Heart left ventricle (tissue), 16 donors: ENCODE measurements at regions of chr2 and their contacts with region 1.

Region 1: GRCh38 chr2:29841386-29842004 is 79.9 kb downstream of the ALK start:
- DNase-seq: no peak
- ATAC-seq: peak in 1 of 4 donors; percentile 66
- H3K4me3 ChIP-seq: no peak overlapping the region
- H3K27ac ChIP-seq: no peak overlapping the region
- H3K4me1 ChIP-seq: no peaks in the 10 kb centered on the region
- H3K27me3 ChIP-seq: peaks cover 0 to 25% (median 2%) of the 10 kb centered on the region in 9 donors
- CTCF ChIP-seq: peak; percentile 72 to 89 (median 82)
- POLR2A ChIP-seq: no peak

Region 2: DNA sequence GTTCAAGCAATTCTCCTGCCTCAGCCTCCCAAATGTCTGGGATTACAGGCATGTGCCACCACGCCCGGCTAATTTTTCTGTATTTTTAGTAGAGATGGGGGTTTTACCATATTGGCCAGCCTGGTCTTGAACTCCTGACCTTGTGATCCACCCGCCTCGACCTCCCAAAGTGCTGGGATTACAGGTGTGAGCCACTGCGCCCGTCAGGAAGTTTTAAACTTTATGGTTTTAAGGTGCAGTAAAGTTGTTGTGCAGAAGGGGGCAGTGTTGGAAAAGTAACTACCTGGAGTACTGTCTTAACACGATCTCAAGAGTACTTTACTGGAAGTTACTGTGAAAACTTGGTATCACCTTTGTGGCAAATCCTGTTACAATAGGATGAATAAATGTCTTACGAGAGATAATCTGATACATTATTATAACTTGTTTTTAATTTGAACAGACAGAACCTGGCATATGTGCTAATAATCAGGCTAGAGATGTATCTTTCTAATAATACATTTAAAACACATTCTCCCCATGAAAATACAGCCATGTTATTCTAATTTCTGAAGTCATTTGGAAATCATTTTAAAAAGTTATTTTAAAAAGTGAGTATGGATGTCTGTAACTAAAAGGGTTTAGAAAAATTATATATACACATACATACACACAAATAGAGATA is 1020.1 kb before region 1 on chr2:
- intact Hi-C with region 1: loop called in 1 of 10 experiments (anchors 10 kb)
- DNase-seq: peak in 2 of 5 donors; percentile 18 to 25
- ATAC-seq: peak in 3 of 4 donors; percentile 60 to 69 (median 67)
- H3K4me3 ChIP-seq: no peak overlapping the region
- H3K27ac ChIP-seq: no peak overlapping the region
- H3K4me1 ChIP-seq: peaks cover 0 to 3% (median 0%) of the 10 kb centered on the region in 12 donors
- H3K27me3 ChIP-seq: no peaks in the 10 kb centered on the region
- CTCF ChIP-seq: peak; percentile 51 to 76 (median 66)
- POLR2A ChIP-seq: no peak

Region 3: GRCh38 chr2:29238497-29238896 is 603.0 kb before region 1 on chr2:
- intact Hi-C with region 1: loop called in 3 of 10 experiments (anchors 2 to 10 kb)
- DNase-seq: no peak
- ATAC-seq: peak in 1 of 4 donors; percentile 62
- H3K4me3 ChIP-seq: no peak overlapping the region
- H3K27ac ChIP-seq: no peak overlapping the region
- H3K4me1 ChIP-seq: no peaks in the 10 kb centered on the region
- H3K27me3 ChIP-seq: peaks cover 0 to 49% (median 5%) of the 10 kb centered on the region in 9 donors
- CTCF ChIP-seq: peak; percentile 18 to 59 (median 34)
- POLR2A ChIP-seq: no peak

Region 4: DNA sequence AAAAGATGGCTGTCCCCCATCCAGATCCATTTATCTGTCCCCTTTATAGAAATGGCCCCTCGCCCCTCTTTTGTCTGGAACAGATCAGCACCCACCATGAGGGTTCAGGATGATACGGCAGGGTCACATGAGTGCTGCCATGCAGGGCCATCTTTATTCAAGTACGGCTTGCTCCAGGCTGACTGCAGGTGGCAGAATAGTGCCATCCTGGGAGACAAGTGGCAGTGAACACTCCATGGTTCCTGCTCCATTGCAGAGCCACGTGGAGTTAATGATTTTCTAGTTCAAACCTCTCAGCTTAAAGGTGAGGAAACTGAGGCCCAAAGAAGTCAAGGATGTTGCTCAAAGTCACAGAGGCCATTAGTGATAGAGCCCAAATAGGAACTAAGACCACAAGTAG is 545.6 kb before region 1 on chr2:
- intact Hi-C with region 1: loop called in 2 of 10 experiments (anchors 5 to 10 kb)
- DNase-seq: no peak
- ATAC-seq: peak in 2 of 4 donors; percentile 62 to 64
- H3K4me3 ChIP-seq: no peak overlapping the region
- H3K27ac ChIP-seq: no peak overlapping the region
- H3K4me1 ChIP-seq: no peaks in the 10 kb centered on the region
- H3K27me3 ChIP-seq: peaks cover 0 to 23% (median 3%) of the 10 kb centered on the region in 9 donors
- CTCF ChIP-seq: peak in 5 of 12 donors; percentile 5 to 41 (median 19)
- POLR2A ChIP-seq: no peak

Region 5: GRCh38 chr2:29309090-29310029 is 532.1 kb before region 1 on chr2:
- intact Hi-C with region 1: loop called in 9 of 10 experiments (anchors 1 to 10 kb)
- DNase-seq: peak in 3 of 5 donors; percentile 34 to 46 (median 37)
- ATAC-seq: peak; percentile 37 to 79 (median 70)
- H3K4me3 ChIP-seq: no peak overlapping the region
- H3K27ac ChIP-seq: no peak overlapping the region
- H3K4me1 ChIP-seq: peaks cover 0 to 3% (median 0%) of the 10 kb centered on the region in 12 donors
- H3K27me3 ChIP-seq: peaks cover 0 to 25% (median 4%) of the 10 kb centered on the region in 9 donors
- CTCF ChIP-seq: peak; percentile 59 to 78 (median 66)
- POLR2A ChIP-seq: no peak